Activated CD4-positive, alpha-beta T cell treated with anti-CD3 and anti-CD28 coated beads for 36 hours (primary cell): ENCODE measurements at regions of chr2 and their contacts with region 1.

Region 1: GRCh38 chr2:24792874-24793760 is at the starts of genes CENPO and PTRHD1:
- DNase-seq: peak; percentile 97
- ATAC-seq: peak; percentile 98
- H3K4me3 Mint-ChIP-seq: peak within 1 kb of the TSS; percentile 97
- H3K27ac Mint-ChIP-seq: peak within 1 kb of the TSS; percentile 100
- H3K4me1 Mint-ChIP-seq: peaks cover 30% of the 10 kb centered on the region
- H3K27me3 Mint-ChIP-seq: no peaks in the 10 kb centered on the region
- total RNA-seq, gene CENPO: 42.4 to 42.7 TPM
- total RNA-seq, gene PTRHD1: 22.3 to 26.5 TPM

Region 2: DNA sequence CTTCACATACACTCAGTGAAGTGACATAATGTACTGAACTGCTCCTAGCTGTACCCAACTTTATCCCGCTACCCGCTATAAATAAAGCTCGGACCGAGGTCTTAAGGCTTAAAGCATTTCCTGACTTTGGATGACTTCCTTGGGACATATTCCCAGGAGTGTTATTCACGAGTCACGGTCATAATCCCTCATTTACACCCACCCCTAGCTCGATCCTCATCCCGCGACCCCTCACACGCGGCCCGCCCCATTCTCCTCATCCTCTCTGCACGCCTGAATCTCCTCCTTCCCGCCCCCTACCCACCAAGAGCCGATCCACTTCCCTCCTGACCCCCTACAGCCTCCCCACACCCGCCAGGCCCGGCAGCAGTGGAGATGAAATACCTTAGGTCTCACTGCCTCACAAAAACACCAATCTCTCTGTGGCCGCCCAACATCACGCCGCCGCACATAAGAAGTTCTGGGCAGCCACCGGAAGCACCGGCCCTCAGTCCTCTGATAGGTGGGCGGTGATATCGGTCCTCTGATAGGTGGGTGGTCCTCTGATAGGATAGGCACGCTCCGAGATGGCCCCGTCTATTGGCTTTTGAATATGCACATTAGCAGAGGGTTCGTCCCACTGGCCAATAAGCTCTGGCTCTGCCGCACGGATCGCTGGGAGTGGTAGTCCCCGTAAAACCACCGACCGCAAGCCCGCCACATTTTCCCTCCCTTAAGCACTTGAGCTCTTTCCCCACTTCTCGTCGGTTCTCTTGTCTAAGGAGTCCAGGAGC is 746.0 kb before region 1 on chr2 and contains the start of gene WDCP:
- CTCF ChIA-PET with region 1: no interaction called
- POLR2A ChIA-PET with region 1: no interaction called
- intact Hi-C with region 1: loop called in 1 of 2 experiments (anchors 1 kb)
- DNase-seq: peak; percentile 97
- ATAC-seq: peak; percentile 100
- H3K4me3 Mint-ChIP-seq: peak within 1 kb of the TSS; percentile 88
- H3K27ac Mint-ChIP-seq: peak within 1 kb of the TSS; percentile 91
- H3K4me1 Mint-ChIP-seq: peaks cover 25% of the 10 kb centered on the region
- H3K27me3 Mint-ChIP-seq: peaks cover 5% of the 10 kb centered on the region
- total RNA-seq, gene WDCP: 13.2 to 21.5 TPM

Region 3: GRCh38 chr2:24360050-24360962 is 432.8 kb before region 1 on chr2 and contains the start of gene ITSN2:
- CTCF ChIA-PET with region 1: no interaction called
- POLR2A ChIA-PET with region 1: no interaction called
- intact Hi-C with region 1: loop called in 1 of 2 experiments (anchors 1 kb)
- DNase-seq: peak; percentile 90
- ATAC-seq: peak; percentile 89
- H3K4me3 Mint-ChIP-seq: peak within 1 kb of the TSS; percentile 84
- H3K27ac Mint-ChIP-seq: peak within 1 kb of the TSS; percentile 94
- H3K4me1 Mint-ChIP-seq: peaks cover 29% of the 10 kb centered on the region
- H3K27me3 Mint-ChIP-seq: no peaks in the 10 kb centered on the region
- total RNA-seq, gene ITSN2: 46.0 to 49.6 TPM

Region 4: DNA sequence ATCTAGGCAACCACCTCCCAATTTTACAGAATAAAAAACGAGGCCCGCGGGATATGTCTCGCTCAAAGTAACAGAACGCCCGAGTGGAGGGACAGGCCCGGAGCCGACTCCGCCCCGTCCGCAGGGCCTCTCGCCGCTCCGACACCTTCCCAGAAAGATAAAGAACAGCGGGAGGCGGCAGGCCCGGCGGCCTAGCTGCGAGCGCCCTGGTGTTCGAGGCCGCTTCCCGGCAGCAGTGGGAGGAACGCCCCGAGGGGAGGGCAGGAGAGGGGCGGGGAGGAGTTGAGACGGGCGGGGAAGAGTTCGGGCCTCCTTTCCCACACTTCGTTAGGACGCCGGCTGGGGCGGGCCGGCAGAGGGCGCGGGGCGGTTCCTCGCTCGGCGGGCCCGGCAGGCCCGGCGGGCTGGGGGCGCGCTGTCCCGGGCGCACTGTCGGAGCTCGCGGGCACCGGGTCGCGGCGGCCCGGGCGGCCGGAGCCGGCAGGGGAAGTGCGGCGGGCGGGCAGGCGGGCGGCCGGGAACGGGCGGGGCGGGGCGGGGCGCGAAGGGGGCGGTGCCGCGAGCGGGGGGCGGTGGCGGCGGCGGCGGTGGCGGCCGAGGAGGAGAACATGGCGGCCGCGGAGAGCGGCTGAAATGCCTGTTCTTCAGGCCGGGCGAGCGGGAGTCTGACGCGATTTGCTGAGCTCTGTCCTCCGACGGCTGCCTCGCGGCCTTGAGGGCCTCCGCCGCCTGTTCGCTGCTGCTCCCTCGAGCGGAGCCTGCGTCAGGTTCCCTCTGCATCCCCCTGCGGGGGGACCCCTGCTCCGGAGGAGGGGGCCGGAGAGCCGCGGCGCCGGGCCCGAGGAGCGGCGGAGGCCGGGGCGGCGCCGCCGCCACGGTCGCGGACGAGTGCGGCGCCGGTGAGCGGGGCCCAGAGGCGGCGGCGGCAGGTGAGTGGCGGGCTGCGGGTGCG is 302.2 kb before region 1 on chr2 and contains the start of gene NCOA1:
- CTCF ChIA-PET with region 1: no interaction called
- POLR2A ChIA-PET with region 1: no interaction called
- intact Hi-C with region 1: loop called (anchors 1 to 2 kb)
- DNase-seq: peak; percentile 96
- ATAC-seq: peak; percentile 89
- H3K4me3 Mint-ChIP-seq: peak within 1 kb of the TSS; percentile 85
- H3K27ac Mint-ChIP-seq: peak within 1 kb of the TSS; percentile 95
- H3K4me1 Mint-ChIP-seq: peaks cover 46% of the 10 kb centered on the region
- H3K27me3 Mint-ChIP-seq: no peaks in the 10 kb centered on the region
- total RNA-seq, gene NCOA1: 20.6 to 29.3 TPM

Region 5: GRCh38 chr2:24613154-24613814 is 179.8 kb before region 1 on chr2:
- CTCF ChIA-PET with region 1: interaction called, 3 read pairs
- POLR2A ChIA-PET with region 1: interaction called, 3 read pairs
- intact Hi-C with region 1: loop called in 1 of 2 experiments (anchors 5 kb)
- DNase-seq: peak; percentile 37
- ATAC-seq: peak; percentile 94
- H3K4me3 Mint-ChIP-seq: no peak overlapping the region
- H3K27ac Mint-ChIP-seq: peak overlapping the region; percentile 72
- H3K4me1 Mint-ChIP-seq: peaks cover 21% of the 10 kb centered on the region
- H3K27me3 Mint-ChIP-seq: no peaks in the 10 kb centered on the region

Region 6: GRCh38 chr2:25041928-25042320 is 248.8 kb after region 1 on chr2 and contains the start of gene EFR3B:
- CTCF ChIA-PET with region 1: no interaction called
- POLR2A ChIA-PET with region 1: interaction called, 5 read pairs
- intact Hi-C with region 1: loop called in 1 of 2 experiments (anchors 2 kb)
- DNase-seq: peak; percentile 93
- ATAC-seq: peak; percentile 84
- H3K4me3 Mint-ChIP-seq: peak within 1 kb of the TSS; percentile 71
- H3K27ac Mint-ChIP-seq: no peak within 1 kb of the TSS
- H3K4me1 Mint-ChIP-seq: peaks cover 32% of the 10 kb centered on the region
- H3K27me3 Mint-ChIP-seq: peaks cover 38% of the 10 kb centered on the region
- total RNA-seq, gene EFR3B: 1.0 to 1.1 TPM

Region 7: GRCh38 chr2:25673300-25674076 is 880.4 kb after region 1 on chr2 and contains the start of gene DTNB:
- CTCF ChIA-PET with region 1: no interaction called
- POLR2A ChIA-PET with region 1: no interaction called
- intact Hi-C with region 1: loop called in 1 of 2 experiments (anchors 5 kb)
- DNase-seq: peak; percentile 86
- ATAC-seq: peak; percentile 74
- H3K4me3 Mint-ChIP-seq: peak within 1 kb of the TSS; percentile 79
- H3K27ac Mint-ChIP-seq: peak within 1 kb of the TSS; percentile 76
- H3K4me1 Mint-ChIP-seq: peaks cover 31% of the 10 kb centered on the region
- H3K27me3 Mint-ChIP-seq: peaks cover 11% of the 10 kb centered on the region
- total RNA-seq, gene DTNB: 17.1 to 33.5 TPM